Right ventricle myocardium inferior (tissue), 1 donor: ENCODE measurements at regions of chr3 and their contacts with region 1.

Region 1: GRCh38 chr3:97821810-97822775 is at the start of gene CRYBG3:
- DNase-seq: peak; percentile 91
- ATAC-seq: peak; percentile 99
- total RNA-seq, gene CRYBG3: 23.1 TPM

Region 2: DNA sequence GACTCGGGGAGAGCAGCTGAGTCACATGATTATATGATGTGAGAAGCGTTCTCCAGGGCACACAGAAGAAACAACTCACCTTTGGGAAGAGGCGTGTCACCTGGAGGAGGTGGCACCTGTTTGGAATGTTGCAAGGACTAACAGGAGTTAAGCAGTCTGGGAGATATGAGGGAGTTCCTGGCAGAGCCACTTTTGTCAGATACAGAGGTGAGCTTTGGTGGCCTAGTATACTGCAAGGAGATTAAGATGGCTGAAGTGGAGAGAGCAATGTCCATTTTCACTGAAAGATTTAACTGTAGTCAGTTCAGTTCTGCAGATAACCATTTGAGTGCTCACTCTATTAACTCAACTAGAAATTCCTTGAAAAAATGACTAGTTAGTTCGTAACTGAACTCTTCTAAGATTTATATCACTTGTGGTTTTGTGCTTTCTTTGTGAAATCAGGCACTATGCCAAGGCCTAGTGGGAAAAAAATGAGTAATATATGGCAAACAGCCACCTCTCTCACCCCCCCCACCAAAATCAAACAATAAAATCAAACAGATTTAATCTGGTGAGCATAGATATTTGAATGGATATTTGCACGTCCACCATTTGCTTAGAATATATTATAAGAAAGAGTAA is 61.0 kb after region 1 on chr3:
- intact Hi-C with region 1: loop called (anchors 5 kb)
- DNase-seq: no peak
- ATAC-seq: no peak

Region 3: DNA sequence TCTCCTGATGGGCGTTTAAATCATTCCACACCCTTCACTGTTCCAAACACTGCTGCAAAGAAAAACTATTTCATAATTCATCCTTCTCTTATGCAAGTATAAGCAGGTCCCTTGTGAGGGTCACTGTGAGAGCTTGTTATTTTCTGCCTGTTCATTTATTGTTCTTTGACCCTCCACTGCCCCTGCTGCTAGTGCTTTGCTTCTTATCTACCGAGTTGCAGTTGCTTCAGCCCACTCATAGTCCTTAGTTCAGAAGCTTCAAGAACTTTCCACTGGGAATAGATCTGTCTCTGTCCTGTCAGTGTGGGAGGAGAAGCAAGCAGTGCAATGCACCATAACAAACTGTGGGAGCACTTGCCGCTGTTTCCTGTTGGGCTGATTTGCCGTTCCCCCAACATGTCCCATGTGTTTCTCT is 110.3 kb after region 1 on chr3:
- intact Hi-C with region 1: loop called (anchors 10 kb)
- DNase-seq: no peak
- ATAC-seq: peak; percentile 95

Region 4: GRCh38 chr3:97971677-97972567 is 149.8 kb after region 1 on chr3 and contains the start of gene RIOX2:
- intact Hi-C with region 1: loop called (anchors 5 kb)
- DNase-seq: peak; percentile 91
- ATAC-seq: peak; percentile 97
- total RNA-seq, gene RIOX2: 13.2 TPM